Lower lobe of right lung (tissue), 2 donors: ENCODE measurements at regions of chr6 and their contacts with region 1.

Region 1: DNA sequence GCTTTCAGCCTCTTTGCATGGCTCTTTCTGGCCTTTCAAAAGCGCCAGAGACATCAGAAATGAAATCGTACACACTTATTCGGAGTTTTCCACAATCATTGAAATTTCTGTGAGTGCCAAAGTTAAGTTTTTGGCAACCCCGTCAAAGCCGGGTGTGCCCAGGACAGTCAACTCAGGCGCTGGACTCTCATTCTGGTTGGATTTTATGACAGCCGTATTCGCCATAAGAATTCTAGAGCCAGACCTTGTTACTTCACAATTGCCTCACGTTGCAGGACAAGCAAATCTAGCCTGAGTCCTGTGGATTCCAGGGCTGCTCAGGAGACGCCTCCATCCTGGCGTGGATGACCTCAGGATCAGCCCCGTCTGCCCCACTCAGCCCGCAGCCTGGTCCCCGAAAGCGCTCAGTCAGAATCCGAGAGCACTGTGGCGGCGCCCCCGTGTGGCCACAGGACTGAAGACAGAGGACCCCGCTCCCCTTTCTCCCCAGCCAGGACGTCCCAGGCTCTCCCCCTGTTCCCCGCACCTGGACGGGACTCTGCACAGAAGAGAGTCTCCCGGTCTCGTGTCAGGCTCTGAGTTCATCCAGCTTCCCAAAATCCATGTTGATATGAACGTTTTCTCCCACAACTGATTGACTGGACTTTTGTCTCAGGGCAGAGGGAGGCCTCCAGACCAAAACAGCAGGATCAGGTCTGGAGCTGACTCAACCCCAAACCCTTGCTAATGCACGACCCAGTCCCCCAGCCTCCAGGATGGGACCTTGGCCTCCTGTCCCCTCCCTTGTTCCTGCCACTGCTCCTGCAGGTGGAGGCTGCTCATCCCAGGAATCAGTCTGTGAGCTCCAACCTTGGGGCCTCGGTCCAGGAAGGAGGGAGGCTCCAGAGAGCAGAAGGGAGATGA is 38.2 kb downstream of the MICA start:
- DNase-seq: peak; percentile 93
- ATAC-seq: peak; percentile 97 to 98
- H3K4me3 ChIP-seq: no peak overlapping the region
- H3K27ac ChIP-seq: no peak overlapping the region
- H3K4me1 ChIP-seq: no peaks in the 10 kb centered on the region
- H3K27me3 ChIP-seq: peaks cover 5% of the 10 kb centered on the region
- CTCF ChIP-seq: peak; percentile 85

Region 2: GRCh38 chr6:31399589-31400466 is 41.8 kb before region 1 on chr6:
- intact Hi-C with region 1: loop called (anchors 10 kb)
- DNase-seq: peak; percentile 96
- ATAC-seq: peak; percentile 86
- H3K4me3 ChIP-seq: peak overlapping the region; percentile 82
- H3K27ac ChIP-seq: peak overlapping the region; percentile 100
- H3K4me1 ChIP-seq: peaks cover 57% of the 10 kb centered on the region
- H3K27me3 ChIP-seq: no peaks in the 10 kb centered on the region
- CTCF ChIP-seq: peak; percentile 88